ENCODE measurements at regions of chr11 and their contacts with region 1.

Region 1: GRCh38 chr11:34492806-34493414 is 20.7 kb downstream of the ELF5 start:
- DNase-seq: peak in 12 of 14 experiments; percentile 7 to 64 (median 17)
- ATAC-seq: no peak
- H3K4me3 ChIP-seq: no peak overlapping the region
- H3K4me3 Mint-ChIP-seq: no peak overlapping the region
- H3K27ac ChIP-seq: no peak overlapping the region
- H3K27ac Mint-ChIP-seq: no peak overlapping the region
- H3K4me1 ChIP-seq: no peaks in the 10 kb centered on the region
- H3K4me1 Mint-ChIP-seq: no peaks in the 10 kb centered on the region
- H3K27me3 ChIP-seq: peaks cover 2 to 3% of the 10 kb centered on the region in 2 experiments
- H3K27me3 Mint-ChIP-seq: peaks cover 5% of the 10 kb centered on the region
- CTCF ChIP-seq: peak; percentile 71

Region 2: GRCh38 chr11:33996498-33997454 is 496.1 kb before region 1 on chr11:
- CTCF ChIA-PET with region 1: no interaction called
- POLR2A ChIA-PET with region 1: no interaction called
- intact Hi-C with region 1: loop called (anchors 2 kb)
- DNase-seq: peak; percentile 53 to 85 (median 66)
- ATAC-seq: peak; percentile 100
- H3K4me3 ChIP-seq: no peak overlapping the region
- H3K4me3 Mint-ChIP-seq: peak overlapping the region; percentile 55
- H3K27ac ChIP-seq: no peak overlapping the region
- H3K27ac Mint-ChIP-seq: no peak overlapping the region
- H3K4me1 ChIP-seq: peaks cover 7% of the 10 kb centered on the region
- H3K4me1 Mint-ChIP-seq: peaks cover 7% of the 10 kb centered on the region
- H3K27me3 ChIP-seq: no peaks in the 10 kb centered on the region
- H3K27me3 Mint-ChIP-seq: peaks cover 23% of the 10 kb centered on the region
- CTCF ChIP-seq: peak; percentile 76

Region 3: GRCh38 chr11:34364102-34364501 is 128.8 kb before region 1 on chr11:
- CTCF ChIA-PET with region 1: no interaction called
- POLR2A ChIA-PET with region 1: no interaction called
- intact Hi-C with region 1: loop called in 1 of 2 experiments (anchors 5 kb)
- DNase-seq: peak in 1 of 14 experiments; percentile 22
- ATAC-seq: no peak
- H3K4me3 ChIP-seq: no peak overlapping the region
- H3K4me3 Mint-ChIP-seq: no peak overlapping the region
- H3K27ac ChIP-seq: no peak overlapping the region
- H3K27ac Mint-ChIP-seq: no peak overlapping the region
- H3K4me1 ChIP-seq: peaks cover under 1% of the 10 kb centered on the region
- H3K4me1 Mint-ChIP-seq: peaks cover 12% of the 10 kb centered on the region
- H3K27me3 ChIP-seq: peaks cover 0 to 10% of the 10 kb centered on the region in 2 experiments
- H3K27me3 Mint-ChIP-seq: peaks cover 34% of the 10 kb centered on the region
- CTCF ChIP-seq: no peak